ENCODE measurements at regions of chr3 and their contacts with region 1.

Region 1: GRCh38 chr3:71226565-71227269 is 356.8 kb downstream of the FOXP1 start:
- DNase-seq: peak; percentile 86
- H3K4me3 Mint-ChIP-seq: peak overlapping the region; percentile 88
- H3K27ac Mint-ChIP-seq: peak overlapping the region; percentile 97
- H3K4me1 Mint-ChIP-seq: peaks cover 63% of the 10 kb centered on the region
- H3K27me3 Mint-ChIP-seq: peaks cover 1% of the 10 kb centered on the region

Region 2: DNA sequence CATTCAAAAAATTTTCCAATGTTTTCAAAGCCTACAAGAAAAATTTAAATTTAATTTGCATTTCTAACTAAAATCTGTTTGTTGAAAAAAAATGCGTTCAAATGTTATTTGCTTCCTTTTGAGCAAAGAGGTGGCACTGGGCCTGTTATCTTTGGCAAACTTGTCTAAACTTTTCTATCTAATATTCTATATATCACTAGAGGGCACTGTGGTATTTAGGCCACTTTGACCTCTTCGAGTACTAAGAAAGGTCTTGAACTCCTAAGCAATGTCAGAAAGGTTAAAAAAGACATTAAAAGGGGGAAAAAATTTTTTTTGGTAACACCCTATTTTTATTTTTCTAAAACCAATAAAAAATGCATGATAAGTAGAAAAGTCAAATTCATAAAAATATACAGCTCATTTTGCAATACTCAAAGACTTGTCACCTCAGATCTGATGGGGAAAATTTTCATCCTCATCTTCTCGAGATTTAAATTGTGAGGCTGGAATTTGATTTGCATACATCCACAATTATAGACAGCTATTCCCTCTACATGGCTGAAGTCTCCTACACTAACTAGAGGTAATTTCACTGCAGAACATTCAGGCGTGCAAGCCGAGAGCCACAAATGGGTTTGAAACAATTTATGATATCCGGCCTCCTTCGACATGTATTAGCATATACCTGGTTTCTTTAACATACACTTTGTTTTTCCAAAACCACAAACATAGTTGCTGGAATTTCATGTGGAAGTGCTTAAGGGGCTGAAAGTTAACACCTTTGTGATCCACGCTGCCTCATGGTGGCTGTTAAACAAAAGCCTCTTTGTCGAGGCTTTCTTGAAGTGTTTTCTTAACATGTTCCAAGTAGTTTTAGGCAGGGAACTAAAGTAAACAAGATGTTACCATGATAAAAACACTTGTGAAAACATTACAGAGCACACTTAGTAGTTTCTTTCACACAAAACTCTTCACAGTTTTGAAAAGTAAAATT is 219.6 kb before region 1 on chr3:
- intact Hi-C with region 1: loop called (anchors 1 kb)
- DNase-seq: no peak
- H3K4me3 Mint-ChIP-seq: no peak overlapping the region
- H3K27ac Mint-ChIP-seq: no peak overlapping the region
- H3K4me1 Mint-ChIP-seq: peaks cover 59% of the 10 kb centered on the region
- H3K27me3 Mint-ChIP-seq: no peaks in the 10 kb centered on the region

Region 3: GRCh38 chr3:71149959-71150954 is 76.5 kb before region 1 on chr3:
- intact Hi-C with region 1: loop called (anchors 1 kb)
- DNase-seq: no peak
- H3K4me3 Mint-ChIP-seq: peak overlapping the region; percentile 3
- H3K27ac Mint-ChIP-seq: peak overlapping the region; percentile 71
- H3K4me1 Mint-ChIP-seq: peaks cover 40% of the 10 kb centered on the region
- H3K27me3 Mint-ChIP-seq: no peaks in the 10 kb centered on the region

Region 4: DNA sequence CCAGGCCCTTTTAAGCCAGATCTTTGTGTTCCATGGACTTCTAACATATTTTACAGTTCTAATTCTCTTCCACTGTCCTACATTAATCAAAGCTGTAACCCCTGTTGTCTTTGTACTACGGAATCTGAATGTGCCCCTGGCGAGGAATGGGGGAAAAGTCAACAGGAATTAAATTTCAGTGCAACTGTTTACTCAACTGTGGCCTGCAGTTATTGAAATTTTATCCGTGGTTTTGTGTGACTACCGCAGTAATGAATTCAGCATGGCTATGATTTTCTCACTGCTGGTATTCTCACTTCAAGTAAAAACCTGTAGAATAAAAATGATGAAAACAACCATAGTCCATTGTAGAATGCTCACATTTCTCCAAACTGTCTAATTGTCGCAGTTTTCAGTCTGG is 31.2 kb before region 1 on chr3:
- intact Hi-C with region 1: loop called (anchors 1 kb)
- DNase-seq: no peak
- H3K4me3 Mint-ChIP-seq: no peak overlapping the region
- H3K27ac Mint-ChIP-seq: no peak overlapping the region
- H3K4me1 Mint-ChIP-seq: peaks cover 53% of the 10 kb centered on the region
- H3K27me3 Mint-ChIP-seq: no peaks in the 10 kb centered on the region

Region 5: DNA sequence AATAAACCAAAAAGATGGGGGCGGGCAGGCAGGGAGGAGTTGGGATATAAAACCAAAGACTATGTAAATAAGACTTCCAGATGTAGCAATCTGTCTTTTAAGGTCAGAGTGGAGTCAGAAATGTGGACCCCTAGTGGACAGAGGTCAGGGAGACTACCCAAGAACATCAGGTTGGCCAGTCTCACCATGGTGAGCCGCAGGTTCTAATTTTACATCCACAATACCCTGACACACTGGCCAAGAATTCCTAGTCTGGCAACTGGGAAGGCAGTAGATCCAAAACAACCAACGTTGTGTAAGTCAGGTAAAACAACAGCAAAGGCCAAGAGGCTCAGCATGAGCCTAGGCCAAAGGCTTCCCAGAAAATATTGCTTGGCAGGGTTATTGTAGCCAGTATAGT is 153.4 kb after region 1 on chr3:
- intact Hi-C with region 1: loop called (anchors 2 kb)
- DNase-seq: no peak
- H3K4me3 Mint-ChIP-seq: no peak overlapping the region
- H3K27ac Mint-ChIP-seq: peak overlapping the region; percentile 68
- H3K4me1 Mint-ChIP-seq: peaks cover 56% of the 10 kb centered on the region
- H3K27me3 Mint-ChIP-seq: no peaks in the 10 kb centered on the region

Region 6: GRCh38 chr3:71444028-71444860 is 217.5 kb after region 1 on chr3:
- intact Hi-C with region 1: loop called (anchors 5 kb)
- DNase-seq: peak; percentile 79
- H3K4me3 Mint-ChIP-seq: peak overlapping the region; percentile 71
- H3K27ac Mint-ChIP-seq: peak overlapping the region; percentile 99
- H3K4me1 Mint-ChIP-seq: peaks cover 86% of the 10 kb centered on the region
- H3K27me3 Mint-ChIP-seq: no peaks in the 10 kb centered on the region

Region 7: DNA sequence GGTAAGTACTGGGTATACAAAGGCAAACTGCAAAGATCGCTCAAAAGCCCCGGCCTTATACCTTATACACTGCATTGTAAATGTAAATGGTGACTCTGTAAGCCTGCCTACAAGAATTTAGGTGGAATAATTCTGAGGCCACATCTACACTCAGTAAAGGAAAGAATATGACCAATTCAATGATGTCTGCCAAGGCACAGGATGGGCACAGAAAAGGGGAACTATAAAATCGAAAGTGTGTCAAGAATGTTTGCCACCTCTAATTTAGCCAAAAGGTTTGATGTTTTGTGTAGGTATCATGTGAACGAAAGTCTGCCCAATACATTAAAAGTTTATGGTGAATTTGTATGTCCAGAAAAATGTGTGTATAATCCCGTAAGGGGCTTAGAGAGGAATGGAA is 260.7 kb after region 1 on chr3:
- intact Hi-C with region 1: loop called (anchors 5 kb)
- DNase-seq: no peak
- H3K4me3 Mint-ChIP-seq: peak overlapping the region; percentile 71
- H3K27ac Mint-ChIP-seq: peak overlapping the region; percentile 91
- H3K4me1 Mint-ChIP-seq: peaks cover 71% of the 10 kb centered on the region
- H3K27me3 Mint-ChIP-seq: no peaks in the 10 kb centered on the region

Measured in activated T-helper 2 cell treated with anti-CD3 and anti-CD28 coated beads, Interferon-gamma antibody, Interleukin-2, Interleukin-4, amounts not matched to agents 10 μg/mL and 5 μg/mL and 100 μg/mL, durations not matched to agents 14 hours and 24 hours and 36 hours (primary cell).